Psoas muscle (tissue), 8 donors: ENCODE measurements at regions of chr5 and their contacts with region 1.

Region 1: GRCh38 chr5:56175488-56175887 is 57.6 kb downstream of the ANKRD55 start:
- DNase-seq: no peak
- ATAC-seq: peak; percentile 37 to 79 (median 74)
- H3K4me3 ChIP-seq: no peak overlapping the region
- H3K27ac ChIP-seq: no peak overlapping the region
- H3K4me1 ChIP-seq: no peaks in the 10 kb centered on the region
- H3K27me3 ChIP-seq: no peaks in the 10 kb centered on the region
- CTCF ChIP-seq: no peak

Region 2: DNA sequence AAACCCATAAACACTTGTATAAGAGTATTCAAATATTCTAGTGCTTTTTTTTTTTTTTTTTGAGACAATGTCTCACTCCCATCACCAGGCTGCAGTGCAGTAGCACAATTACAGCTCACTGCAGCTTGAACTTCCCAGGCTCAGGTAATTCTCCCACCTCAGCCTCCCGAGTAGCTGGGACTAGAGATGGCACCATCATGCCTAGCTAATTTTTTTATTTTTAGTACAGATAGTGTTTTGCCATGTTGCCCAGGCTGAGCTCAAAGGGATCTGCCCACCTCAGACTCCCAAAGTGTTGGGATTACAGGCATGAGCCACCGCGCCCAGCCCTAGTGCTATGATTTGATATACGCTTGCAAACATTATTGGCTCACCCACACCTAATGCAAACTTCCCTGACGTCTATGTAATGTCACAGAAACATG is 192.5 kb before region 1 on chr5:
- intact Hi-C with region 1: loop called in 1 of 2 experiments (anchors 10 kb)
- DNase-seq: no peak
- ATAC-seq: peak in 2 of 4 donors; percentile 4 to 17
- H3K4me3 ChIP-seq: no peak overlapping the region
- H3K27ac ChIP-seq: peak overlapping the region; percentile 11
- H3K4me1 ChIP-seq: peaks cover 44% of the 10 kb centered on the region
- H3K27me3 ChIP-seq: no peaks in the 10 kb centered on the region
- CTCF ChIP-seq: peak; percentile 22